ENCODE measurements at regions of chr13 and their contacts with region 1.

Region 1: GRCh38 chr13:104705031-104705750 is 1639.0 kb upstream of the SLC10A2 start:
- DNase-seq: no peak
- H3K4me3 ChIP-seq: no peak overlapping the region
- H3K27ac ChIP-seq: no peak overlapping the region
- H3K4me1 ChIP-seq: no peaks in the 10 kb centered on the region
- H3K27me3 ChIP-seq: no peaks in the 10 kb centered on the region
- CTCF ChIP-seq: no peak

Region 2: GRCh38 chr13:104764600-104764999 is 59.4 kb after region 1 on chr13:
- CTCF ChIA-PET with region 1: no interaction called
- dilution Hi-C with region 1: loop called (anchors 5 kb)
- in situ Hi-C with region 1: no loop called
- intact Hi-C with region 1: no loop called
- DNase-seq: no peak
- H3K4me3 ChIP-seq: no peak overlapping the region
- H3K27ac ChIP-seq: no peak overlapping the region
- H3K4me1 ChIP-seq: no peaks in the 10 kb centered on the region
- H3K27me3 ChIP-seq: peaks cover 2% of the 10 kb centered on the region
- CTCF ChIP-seq: no peak

Measured in mammary epithelial cell (primary cell).